ENCODE measurements at regions of chr11 and their contacts with region 1.

Region 1: GRCh38 chr11:96188243-96189006 is 154.6 kb downstream of the MAML2 start:
- DNase-seq: peak; percentile 75
- ATAC-seq: peak; percentile 67
- H3K4me3 ChIP-seq: no peak overlapping the region
- H3K27ac ChIP-seq: peak overlapping the region; percentile 93
- H3K4me1 ChIP-seq: peaks cover 76% of the 10 kb centered on the region
- H3K27me3 ChIP-seq: no peaks in the 10 kb centered on the region
- CTCF ChIP-seq: no peak
- EP300 ChIP-seq: peak; percentile 23 to 78; a peak in 3 of 4 replicates
- POLR2A ChIP-seq: no peak
- RAD21 ChIP-seq: no peak

Region 2: DNA sequence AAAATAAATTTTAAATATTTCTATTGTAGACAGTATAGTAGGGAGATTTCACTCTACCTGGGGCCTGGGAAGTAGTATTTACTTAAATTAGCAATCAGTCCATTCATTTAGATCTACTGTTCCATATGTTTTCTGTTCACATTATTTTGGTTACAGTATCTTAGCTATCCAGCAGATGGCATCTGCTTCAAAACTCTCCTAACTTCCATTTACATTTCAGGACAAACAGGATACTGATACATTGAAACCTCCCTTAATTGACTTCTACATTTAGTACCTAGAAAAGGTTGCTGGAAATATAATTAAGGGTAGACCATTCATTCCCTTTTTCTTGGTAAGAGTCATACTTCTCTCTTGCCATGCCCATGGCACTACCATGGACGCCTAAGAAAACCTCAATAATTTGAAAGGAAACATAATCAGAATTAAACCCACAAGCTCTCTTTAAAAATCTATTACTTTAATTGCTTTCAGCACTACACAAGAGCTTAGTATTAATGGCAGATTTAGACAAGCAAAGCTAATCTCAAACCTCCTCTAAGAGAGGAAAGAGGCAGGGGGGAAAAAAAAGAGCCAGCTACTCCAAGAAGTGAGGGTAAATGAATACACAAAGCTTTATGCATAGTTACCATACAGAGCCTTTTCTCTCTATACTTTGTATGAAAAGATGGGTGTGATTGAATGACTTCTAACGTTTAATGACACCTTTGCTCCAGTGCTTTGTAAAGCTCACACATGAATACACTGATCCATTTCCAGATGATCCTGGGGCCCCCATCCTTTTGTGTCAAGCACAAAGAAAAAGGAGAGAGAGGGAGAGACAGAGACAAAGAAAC is 133.3 kb before region 1 on chr11:
- CTCF ChIA-PET with region 1: interaction called, 12 read pairs
- POLR2A ChIA-PET with region 1: no interaction called
- RAD21 ChIA-PET with region 1: interaction called, 6 read pairs
- SMC1A ChIA-PET with region 1: interaction called, 8 read pairs
- in situ Hi-C with region 1: no loop called
- intact Hi-C with region 1: loop called (anchors 2 kb)
- DNase-seq: no peak
- ATAC-seq: no peak
- H3K4me3 ChIP-seq: no peak overlapping the region
- H3K27ac ChIP-seq: no peak overlapping the region
- H3K4me1 ChIP-seq: peaks cover 27% of the 10 kb centered on the region
- H3K27me3 ChIP-seq: no peaks in the 10 kb centered on the region
- CTCF ChIP-seq: peak; percentile 46 to 58 (median 48)
- EP300 ChIP-seq: no peak
- POLR2A ChIP-seq: no peak
- RAD21 ChIP-seq: peak; percentile 63

Region 3: GRCh38 chr11:96215110-96215782 is 26.8 kb after region 1 on chr11:
- CTCF ChIA-PET with region 1: interaction called, 10 read pairs
- POLR2A ChIA-PET with region 1: interaction called, 3 read pairs
- RAD21 ChIA-PET with region 1: interaction called, 3 read pairs
- SMC1A ChIA-PET with region 1: interaction called, 10 read pairs
- in situ Hi-C with region 1: no loop called
- intact Hi-C with region 1: loop called (anchors 1 kb)
- DNase-seq: peak; percentile 72
- ATAC-seq: peak; percentile 91
- H3K4me3 ChIP-seq: peak overlapping the region; percentile 18; the same call in 1 of the 2 replicates
- H3K27ac ChIP-seq: peak overlapping the region; percentile 77
- H3K4me1 ChIP-seq: peaks cover 38% of the 10 kb centered on the region
- H3K27me3 ChIP-seq: no peaks in the 10 kb centered on the region
- CTCF ChIP-seq: no peak
- EP300 ChIP-seq: peak in 1 of 2 experiments; percentile 40; a peak in 1 of 4 replicates
- POLR2A ChIP-seq: no peak
- RAD21 ChIP-seq: no peak

Region 4: DNA sequence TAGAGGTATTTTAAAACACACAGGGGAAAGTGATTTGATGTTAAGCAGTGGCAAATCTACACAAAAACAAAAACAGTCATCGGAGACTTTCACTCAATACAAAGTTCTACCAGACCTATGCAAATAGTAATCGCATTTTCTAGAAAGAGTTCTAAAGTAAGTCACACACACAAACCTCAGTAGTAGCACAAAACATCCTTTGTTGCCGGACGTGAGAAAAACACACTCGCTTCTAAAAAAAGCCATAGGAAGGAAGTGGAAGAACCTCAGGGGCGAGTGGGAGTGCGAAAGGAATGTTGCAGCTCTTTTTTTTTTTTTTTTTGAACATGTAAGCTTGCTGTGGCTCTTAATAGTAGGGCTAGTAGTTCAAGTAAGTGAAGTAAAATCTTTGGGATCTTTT is 65.7 kb after region 1 on chr11:
- CTCF ChIA-PET with region 1: interaction called, 4 read pairs
- POLR2A ChIA-PET with region 1: interaction called, 4 read pairs
- RAD21 ChIA-PET with region 1: no interaction called
- SMC1A ChIA-PET with region 1: interaction called, 21 read pairs
- in situ Hi-C with region 1: no loop called
- intact Hi-C with region 1: loop called (anchors 5 kb)
- DNase-seq: peak; percentile 91
- ATAC-seq: peak; percentile 58
- H3K4me3 ChIP-seq: peak overlapping the region; percentile 34
- H3K27ac ChIP-seq: peak overlapping the region; percentile 34
- H3K4me1 ChIP-seq: peaks cover 60% of the 10 kb centered on the region
- H3K27me3 ChIP-seq: no peaks in the 10 kb centered on the region
- CTCF ChIP-seq: no peak
- EP300 ChIP-seq: peak; percentile 19 to 62; a peak in 1 of 4 replicates
- POLR2A ChIP-seq: no peak
- RAD21 ChIP-seq: peak; percentile 23; the same call in 1 of the 2 replicates

Measured in GM12878 (cell line).